Endothelial cell of umbilical vein (primary cell): ENCODE measurements at regions of chr5 and their contacts with region 1.

Region 1: DNA sequence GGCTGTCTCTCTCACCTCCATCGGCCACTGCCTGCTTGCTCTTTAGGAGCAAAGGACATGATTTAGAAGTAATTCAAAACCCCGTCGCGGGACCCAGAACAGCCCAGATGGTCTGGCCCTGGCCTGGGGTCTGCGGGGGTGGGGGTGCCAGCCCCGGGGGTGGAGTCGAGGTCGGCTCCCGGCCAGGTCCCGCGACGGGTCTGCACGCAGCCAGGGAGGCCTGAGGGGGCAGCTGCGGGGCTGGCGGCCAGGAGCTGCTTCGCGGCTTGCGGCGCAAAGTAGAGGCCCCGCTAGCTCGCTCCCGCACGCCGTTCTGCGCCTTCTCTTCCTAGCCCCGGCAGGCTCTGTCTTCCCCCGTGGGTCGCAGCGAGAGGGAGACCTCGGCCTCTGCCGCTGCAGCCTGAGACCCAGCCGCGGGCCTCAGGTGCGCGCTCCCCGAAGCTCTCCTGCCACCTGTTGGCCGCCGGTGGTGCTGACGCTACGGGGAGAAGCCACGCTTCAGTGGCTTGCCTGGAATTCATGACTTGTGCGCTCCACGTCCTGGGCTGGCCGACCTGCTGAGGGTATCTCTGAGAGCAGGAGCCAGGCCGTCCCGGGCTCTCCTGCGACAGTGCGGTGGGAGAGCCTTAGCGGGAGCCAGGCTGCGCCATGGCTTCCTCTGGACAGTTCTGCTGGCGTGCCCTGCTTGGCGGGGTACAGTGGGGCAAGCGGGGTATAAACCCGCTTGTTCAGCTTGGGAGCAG is 157.2 kb upstream of the PITX1 start:
- DNase-seq: peak; percentile 73
- H3K4me3 ChIP-seq: peak overlapping the region in 2 of 3 experiments; percentile 22 to 40
- H3K27ac ChIP-seq: no peak overlapping the region
- H3K4me1 ChIP-seq: peaks cover 17% of the 10 kb centered on the region
- H3K27me3 ChIP-seq: peaks cover 7 to 28% of the 10 kb centered on the region in 2 experiments
- CTCF ChIP-seq: peak; percentile 81 to 98
- POLR2A ChIP-seq: no peak

Region 2: DNA sequence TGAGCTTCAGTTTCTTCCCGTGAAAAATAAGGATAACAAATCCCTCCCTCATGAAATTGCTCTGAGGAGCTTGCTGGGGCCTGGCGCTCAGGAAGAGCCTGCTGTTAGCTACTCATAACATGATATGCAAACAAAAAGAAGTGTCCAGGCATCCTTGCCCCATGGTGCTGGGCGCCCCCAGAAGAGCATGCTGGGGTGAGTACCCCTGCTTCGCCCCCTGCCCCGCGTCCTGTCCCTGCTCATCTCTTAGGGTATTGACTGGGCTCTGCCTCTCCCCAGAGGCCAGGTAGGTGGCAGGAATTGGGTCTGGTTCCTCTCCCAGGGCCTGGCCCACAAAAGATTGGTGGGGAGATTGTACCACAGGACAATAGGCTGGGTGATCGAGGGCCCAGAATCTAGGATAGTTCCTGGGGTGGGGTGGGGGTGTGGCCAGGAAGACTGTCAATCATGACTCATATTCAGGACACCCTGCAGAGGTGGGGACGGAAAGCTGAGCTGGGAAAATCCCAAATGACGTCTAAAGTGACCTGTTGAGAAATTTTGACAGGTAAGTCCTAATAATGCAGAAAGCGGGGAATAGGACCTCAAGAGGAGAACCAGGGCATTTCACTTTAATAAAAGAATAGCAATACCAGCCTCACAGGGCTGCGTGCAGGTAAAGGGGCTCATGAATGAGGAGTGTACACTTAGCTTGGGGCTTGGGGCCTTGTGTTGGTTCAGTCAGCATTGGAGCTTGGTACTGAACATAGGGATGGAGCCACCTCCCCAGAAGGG is 166.1 kb before region 1 on chr5:
- CTCF ChIA-PET with region 1: interaction called, 4 read pairs
- POLR2A ChIA-PET with region 1: no interaction called
- dilution Hi-C with region 1: no loop called
- intact Hi-C with region 1: loop called (anchors 5 kb)
- DNase-seq: no peak
- H3K4me3 ChIP-seq: no peak overlapping the region
- H3K27ac ChIP-seq: no peak overlapping the region
- H3K4me1 ChIP-seq: no peaks in the 10 kb centered on the region
- H3K27me3 ChIP-seq: peaks cover 38 to 50% of the 10 kb centered on the region in 2 experiments
- CTCF ChIP-seq: no peak
- POLR2A ChIP-seq: no peak

Region 3: GRCh38 chr5:135174315-135175096 is 16.7 kb before region 1 on chr5:
- CTCF ChIA-PET with region 1: interaction called, 26 read pairs
- POLR2A ChIA-PET with region 1: no interaction called
- dilution Hi-C with region 1: no loop called
- intact Hi-C with region 1: no loop called
- DNase-seq: no peak
- H3K4me3 ChIP-seq: no peak overlapping the region
- H3K27ac ChIP-seq: no peak overlapping the region
- H3K4me1 ChIP-seq: no peaks in the 10 kb centered on the region
- H3K27me3 ChIP-seq: peaks cover 10 to 20% of the 10 kb centered on the region in 2 experiments
- CTCF ChIP-seq: no peak
- POLR2A ChIP-seq: no peak

Region 4: GRCh38 chr5:135246923-135247795 is 55.9 kb after region 1 on chr5:
- CTCF ChIA-PET with region 1: interaction called, 13 read pairs
- POLR2A ChIA-PET with region 1: no interaction called
- dilution Hi-C with region 1: no loop called
- intact Hi-C with region 1: no loop called
- DNase-seq: peak; percentile 90
- H3K4me3 ChIP-seq: no peak overlapping the region
- H3K27ac ChIP-seq: peak overlapping the region; percentile 21
- H3K4me1 ChIP-seq: peaks cover 22% of the 10 kb centered on the region
- H3K27me3 ChIP-seq: no peaks in the 10 kb centered on the region
- CTCF ChIP-seq: no peak
- POLR2A ChIP-seq: no peak